GM18951 (cell line): ENCODE measurements at regions of chr5 and their contacts with region 1.

Region 1: DNA sequence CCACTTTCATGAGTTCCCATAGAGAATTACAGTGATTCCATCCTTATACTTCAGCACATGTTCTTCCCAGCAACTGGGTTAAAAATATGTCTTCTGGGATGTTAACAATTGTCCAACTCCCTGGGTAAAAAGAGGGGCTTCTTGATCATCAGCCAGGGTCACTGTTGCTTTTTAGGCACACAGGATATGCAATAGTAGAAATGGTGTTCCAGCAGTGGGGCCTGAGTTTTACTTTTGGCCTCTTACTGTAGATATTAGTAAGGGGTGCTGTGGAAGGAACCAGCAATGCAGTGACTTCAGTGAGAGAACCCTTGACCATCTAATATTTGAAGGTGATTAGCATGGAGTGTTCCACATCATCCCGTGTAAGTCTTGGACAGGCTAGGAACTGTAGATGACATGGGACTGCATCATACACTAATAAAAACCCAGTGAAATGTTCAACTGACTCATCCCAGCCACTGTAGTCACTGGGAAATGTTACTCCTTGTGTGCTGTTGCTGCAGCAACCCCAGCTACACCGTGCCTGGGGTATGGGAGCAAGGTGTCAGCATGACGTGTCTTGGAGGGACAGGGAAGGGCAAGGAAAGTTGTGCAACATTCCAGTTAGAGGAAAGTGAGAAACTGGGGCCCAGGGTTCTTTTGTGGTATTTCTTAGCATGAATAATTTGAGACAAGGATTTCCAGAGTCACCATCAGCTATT is 610.9 kb downstream of the RAB3C start:
- POLR2A ChIP-seq: no peak

Region 2: DNA sequence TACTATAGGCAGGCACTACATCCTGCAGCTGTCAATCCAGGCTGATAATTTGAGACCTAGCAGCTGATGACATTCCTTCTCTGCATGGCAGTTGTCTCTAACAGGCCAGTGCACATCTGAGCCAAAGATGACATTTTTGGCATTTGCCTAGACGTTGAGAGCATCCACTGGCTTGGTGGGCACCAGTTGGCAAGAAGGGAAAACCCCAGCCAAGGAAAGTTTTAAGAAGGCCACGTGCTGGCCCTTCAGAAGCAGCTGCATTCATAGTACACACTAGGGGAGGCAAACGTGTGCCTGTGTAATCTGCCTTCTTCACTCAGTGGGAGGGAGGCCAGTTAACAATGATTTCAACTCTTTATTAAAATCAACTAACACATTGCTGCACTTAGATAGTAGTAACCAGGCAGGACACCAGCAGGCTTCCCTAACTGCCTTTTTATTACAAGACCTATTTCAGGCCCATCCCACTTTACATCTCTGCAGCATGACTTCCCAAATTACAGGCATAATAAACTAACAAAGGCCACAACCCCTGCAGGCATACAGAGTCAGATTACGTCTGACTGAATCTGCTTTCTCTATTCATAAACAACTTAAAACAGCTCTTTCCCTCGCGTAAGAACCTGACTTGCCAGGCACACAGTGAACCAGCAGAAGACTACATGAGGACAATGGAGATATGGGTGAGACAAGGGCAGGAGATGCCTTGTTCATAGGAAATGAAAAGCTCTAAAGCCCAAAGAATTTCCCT is 123.4 kb after region 1 on chr5:
- in situ Hi-C with region 1: no loop called
- POLR2A ChIP-seq: no peak

Region 3: DNA sequence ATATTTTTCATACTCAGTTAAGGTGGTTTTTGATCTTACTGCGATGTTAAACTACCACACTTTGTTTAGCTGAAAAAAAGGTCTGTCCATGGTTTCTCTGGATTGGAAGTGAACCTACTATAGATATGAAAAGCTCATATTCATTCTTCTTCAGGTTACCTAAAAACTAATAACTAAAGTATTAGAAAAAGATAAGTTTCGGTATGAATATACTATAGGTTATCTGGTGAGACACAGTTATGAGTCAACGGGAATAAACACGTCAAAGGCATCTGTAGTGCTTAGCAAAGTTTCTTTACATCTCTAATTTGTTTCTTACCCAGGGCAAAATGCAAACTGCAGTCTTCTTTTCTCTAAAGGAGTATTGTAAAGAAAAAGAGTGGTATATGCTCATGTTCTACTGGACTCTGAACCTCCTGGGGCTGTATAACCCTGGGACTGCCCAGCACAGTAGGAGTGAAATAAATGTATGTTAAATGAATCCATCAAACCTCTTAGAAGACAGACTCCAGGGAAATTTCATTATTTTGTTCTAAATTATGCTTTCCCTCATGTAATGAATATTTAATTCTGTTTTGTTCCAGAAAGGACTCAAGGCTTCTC is 177.9 kb after region 1 on chr5:
- in situ Hi-C with region 1: loop called (anchors 10 kb)
- POLR2A ChIP-seq: no peak

Region 4: GRCh38 chr5:60687927-60688720 is 1494.4 kb after region 1 on chr5:
- in situ Hi-C with region 1: loop called (anchors 10 kb)
- POLR2A ChIP-seq: no peak